ENCODE measurements at regions of chr16 and their contacts with region 1.

Region 1: DNA sequence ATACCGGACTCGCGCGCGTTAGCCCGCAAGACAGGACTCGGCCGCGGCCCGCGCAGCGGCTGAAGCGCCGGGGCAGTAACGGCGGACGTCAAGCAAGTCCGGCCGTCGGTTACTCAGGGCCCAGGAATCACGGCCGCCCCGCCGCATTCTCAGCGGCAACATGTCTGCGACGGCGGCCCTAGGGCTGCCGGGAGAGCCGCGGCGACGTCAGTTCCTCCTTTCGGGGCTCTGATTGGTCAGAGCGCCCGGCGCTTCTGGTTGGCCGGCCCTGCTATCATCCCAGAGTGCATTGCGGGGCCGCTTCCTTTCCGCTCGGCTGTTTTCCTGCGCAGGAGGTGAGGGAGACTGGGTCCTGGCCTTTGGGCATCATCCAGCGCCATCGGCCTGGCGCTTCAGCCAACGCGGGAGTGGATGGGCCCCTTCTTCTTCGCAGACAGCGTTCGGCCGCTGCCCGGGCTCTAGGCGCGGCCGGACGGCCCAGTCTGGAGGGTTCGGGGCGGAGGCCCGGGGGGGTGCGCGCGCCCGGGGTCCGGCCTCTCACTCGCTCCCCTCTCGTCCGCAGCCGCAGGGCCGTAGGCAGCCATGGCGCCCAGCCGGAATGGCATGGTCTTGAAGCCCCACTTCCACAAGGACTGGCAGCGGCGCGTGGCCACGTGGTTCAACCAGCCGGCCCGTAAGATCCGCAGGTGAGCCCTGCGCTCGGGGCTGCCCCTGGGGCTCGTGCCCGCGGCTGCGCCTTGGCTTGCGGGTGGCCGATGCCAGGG is at the start of gene RPL13:
- DNase-seq: peak; percentile 94
- ATAC-seq: peak; percentile 67
- H3K4me3 ChIP-seq: peak within 1 kb of the TSS; percentile 99
- H3K27ac ChIP-seq: peak within 1 kb of the TSS; percentile 93
- H3K4me1 ChIP-seq: peaks cover 49% of the 10 kb centered on the region
- H3K27me3 ChIP-seq: no peaks in the 10 kb centered on the region
- CTCF ChIP-seq: no peak
- total RNA-seq, gene RPL13: 3,236 and 3,323 TPM in 2 replicates

Region 2: DNA sequence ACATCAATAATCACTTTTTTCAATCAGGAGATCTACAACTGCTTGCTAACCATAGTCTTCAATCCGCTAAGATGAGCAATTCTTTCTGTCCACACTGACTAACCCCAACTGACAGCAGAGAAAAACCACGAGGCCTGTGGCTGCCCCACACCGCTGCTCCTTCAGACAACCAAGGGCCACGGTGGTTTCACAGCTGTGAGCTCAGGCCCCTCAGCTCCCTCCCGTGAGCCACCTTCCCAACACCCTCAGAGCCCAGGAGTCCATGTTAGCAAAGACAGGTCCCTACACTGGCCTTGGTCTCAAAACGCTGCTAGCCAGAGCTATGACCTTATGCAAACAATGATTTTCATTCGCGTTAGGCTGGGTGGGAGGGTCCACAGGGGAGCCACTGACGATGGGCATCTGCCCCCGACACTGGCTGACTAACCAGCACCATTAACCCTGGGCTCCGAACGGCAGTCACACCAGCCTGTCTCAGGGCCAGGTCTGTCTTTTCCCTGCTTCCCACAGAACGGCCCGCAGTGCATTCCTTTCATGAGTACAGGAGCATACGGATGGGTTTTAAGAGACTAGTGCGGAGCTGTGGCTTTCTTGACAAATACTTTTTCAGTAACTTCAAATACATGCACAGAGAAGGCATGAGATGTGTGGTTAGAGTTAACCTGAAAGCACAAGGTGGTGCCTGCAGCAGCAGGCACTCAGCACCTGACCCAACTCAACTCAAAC is 137.5 kb before region 1 on chr16:
- CTCF ChIA-PET with region 1: no interaction called
- POLR2A ChIA-PET with region 1: interaction called, 26 read pairs
- intact Hi-C with region 1: no loop called
- DNase-seq: peak; percentile 59
- ATAC-seq: peak; percentile 77
- H3K4me3 ChIP-seq: peak overlapping the region; percentile 21; the same call in 1 of the 2 replicates
- H3K27ac ChIP-seq: peak overlapping the region; percentile 78
- H3K4me1 ChIP-seq: peaks cover 18% of the 10 kb centered on the region
- H3K27me3 ChIP-seq: no peaks in the 10 kb centered on the region
- CTCF ChIP-seq: no peak

Measured in PC-3 (cell line).